H1 (cell line): ENCODE measurements at regions of chr6 and their contacts with region 1.

Region 1: DNA sequence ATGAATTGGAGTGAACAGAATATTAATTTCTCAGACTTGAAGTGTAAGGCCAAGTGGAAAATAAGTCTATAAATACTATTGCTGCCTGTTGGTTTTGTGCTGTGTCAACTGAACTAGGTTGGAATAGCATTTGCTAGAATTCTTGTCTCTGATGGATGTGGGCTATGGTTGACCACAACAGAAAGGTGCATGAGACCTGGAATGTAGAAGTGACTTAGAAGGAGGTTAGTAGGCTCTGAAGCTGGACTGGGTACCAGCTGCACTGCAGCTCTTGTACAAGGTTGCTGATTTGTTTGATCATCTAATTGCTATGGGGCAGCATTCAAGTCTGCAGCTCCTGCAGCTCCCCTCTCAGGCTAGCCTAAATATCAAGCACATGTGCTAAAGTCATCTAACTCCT is 479.0 kb upstream of the NRSN1 start:
- DNase-seq: no peak
- H3K4me3 ChIP-seq: no peak overlapping the region
- H3K27ac ChIP-seq: no peak overlapping the region
- H3K4me1 ChIP-seq: no peaks in the 10 kb centered on the region
- H3K27me3 ChIP-seq: no peaks in the 10 kb centered on the region
- CTCF ChIP-seq: no peak
- EP300 ChIP-seq: no peak
- POLR2A ChIP-seq: no peak
- RAD21 ChIP-seq: no peak

Region 2: DNA sequence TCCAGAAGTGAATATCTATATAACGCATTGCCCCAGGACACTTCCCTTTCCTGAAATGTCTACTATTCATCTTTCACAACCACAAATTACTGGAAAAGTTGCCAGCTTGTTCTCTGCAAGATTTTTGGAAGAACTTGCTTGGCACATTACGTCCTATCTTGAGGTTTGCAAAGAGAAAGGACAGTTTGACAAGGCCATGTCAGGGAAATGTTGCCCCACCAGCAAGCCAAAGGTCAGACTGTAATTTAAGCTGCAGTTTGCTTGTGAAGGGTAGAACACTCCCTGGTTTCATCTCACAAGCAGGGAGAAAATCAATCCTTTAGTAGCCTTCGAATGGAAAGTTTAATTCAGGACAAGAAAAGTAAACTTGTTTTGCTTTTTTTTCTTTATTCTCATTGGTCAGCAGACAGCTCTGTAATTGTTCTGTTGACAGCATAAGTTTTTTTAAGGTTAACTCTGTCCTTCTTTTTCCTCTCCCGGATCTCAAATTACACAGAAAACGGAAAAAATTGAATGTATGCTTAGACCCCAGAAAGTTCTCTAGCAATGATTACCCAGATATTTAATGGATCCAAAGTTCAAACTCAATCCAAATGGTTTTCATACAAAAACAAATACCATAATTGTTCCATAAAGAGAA is 62.8 kb before region 1 on chr6:
- CTCF ChIA-PET with region 1: no interaction called
- POLR2A ChIA-PET with region 1: no interaction called
- DNase-seq: no peak
- H3K4me3 ChIP-seq: no peak overlapping the region
- H3K27ac ChIP-seq: no peak overlapping the region
- H3K4me1 ChIP-seq: no peaks in the 10 kb centered on the region
- H3K27me3 ChIP-seq: no peaks in the 10 kb centered on the region
- CTCF ChIP-seq: no peak
- EP300 ChIP-seq: no peak
- POLR2A ChIP-seq: no peak
- RAD21 ChIP-seq: no peak

Region 3: GRCh38 chr6:23659125-23659524 is 12.1 kb after region 1 on chr6:
- CTCF ChIA-PET with region 1: interaction called, 15 read pairs
- POLR2A ChIA-PET with region 1: no interaction called
- DNase-seq: peak in 1 of 2 experiments; percentile 9
- H3K4me3 ChIP-seq: no peak overlapping the region
- H3K27ac ChIP-seq: no peak overlapping the region
- H3K4me1 ChIP-seq: peaks cover 0 to 6% (median 4%) of the 10 kb centered on the region in 4 experiments; a peak in 3 of 7 replicates
- H3K27me3 ChIP-seq: no peaks in the 10 kb centered on the region
- CTCF ChIP-seq: peak; percentile 62 to 89 (median 68)
- EP300 ChIP-seq: no peak
- POLR2A ChIP-seq: no peak
- RAD21 ChIP-seq: peak; percentile 93